Activated CD4-positive, alpha-beta T cell treated with anti-CD3 and anti-CD28 coated beads, Interleukin-2, amount 10 ng/mL, durations not matched to agents 24 days and 14 days (primary cell): ENCODE measurements at regions of chr4 and their contacts with region 1.

Region 1: DNA sequence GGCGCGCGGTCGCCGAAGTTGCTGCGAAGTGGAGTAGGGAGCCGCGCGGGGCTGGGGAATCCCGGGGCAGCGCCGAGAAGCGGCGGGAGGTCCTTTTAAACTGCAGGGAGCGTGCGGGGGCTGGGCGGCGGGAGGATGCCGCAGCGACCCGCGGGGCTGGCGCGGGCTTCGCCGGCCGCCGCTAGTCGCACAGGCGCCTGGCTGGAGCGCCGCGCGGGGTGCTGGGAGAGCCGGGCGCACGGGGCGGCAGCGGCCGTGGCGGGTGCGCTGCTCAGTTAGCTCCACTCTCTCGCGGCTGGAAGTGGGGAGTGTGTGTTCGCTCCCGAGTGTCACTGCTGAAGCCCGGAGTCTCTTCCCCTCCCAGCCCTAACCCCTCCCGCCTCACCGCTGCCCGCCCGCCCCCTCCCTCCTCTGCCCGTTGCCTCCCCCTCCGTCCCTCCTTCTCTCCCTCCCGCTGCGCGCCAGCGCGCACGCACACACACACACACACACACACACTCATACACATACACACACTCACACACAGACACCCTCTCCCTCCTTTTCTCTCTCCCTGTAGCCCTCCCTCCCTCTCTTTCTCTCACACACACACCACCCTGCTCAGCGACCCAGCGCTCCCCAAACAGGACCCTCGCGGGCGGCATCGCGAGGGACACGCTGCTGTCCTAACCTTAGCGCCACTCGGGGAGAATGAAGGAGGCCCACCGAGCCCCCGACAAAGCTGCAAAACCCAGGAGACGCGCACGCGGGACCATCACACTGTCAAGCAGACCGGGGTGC is at the start of gene NDNF:
- DNase-seq: peak; percentile 83
- H3K4me3 Mint-ChIP-seq: peak within 1 kb of the TSS; percentile 85
- H3K27ac Mint-ChIP-seq: peak within 1 kb of the TSS; percentile 32
- H3K4me1 Mint-ChIP-seq: peaks cover 25% of the 10 kb centered on the region
- H3K27me3 Mint-ChIP-seq: peaks cover 71% of the 10 kb centered on the region
- total RNA-seq, gene NDNF: 0.14 TPM in 1 of 2 replicates, not detected in the other

Region 2: GRCh38 chr4:120731561-120731960 is 340.9 kb before region 1 on chr4:
- intact Hi-C with region 1: no loop called
- DNase-seq: no peak
- H3K4me3 Mint-ChIP-seq: no peak overlapping the region
- H3K27ac Mint-ChIP-seq: no peak overlapping the region
- H3K4me1 Mint-ChIP-seq: no peaks in the 10 kb centered on the region
- H3K27me3 Mint-ChIP-seq: peaks cover 11% of the 10 kb centered on the region

Region 3: DNA sequence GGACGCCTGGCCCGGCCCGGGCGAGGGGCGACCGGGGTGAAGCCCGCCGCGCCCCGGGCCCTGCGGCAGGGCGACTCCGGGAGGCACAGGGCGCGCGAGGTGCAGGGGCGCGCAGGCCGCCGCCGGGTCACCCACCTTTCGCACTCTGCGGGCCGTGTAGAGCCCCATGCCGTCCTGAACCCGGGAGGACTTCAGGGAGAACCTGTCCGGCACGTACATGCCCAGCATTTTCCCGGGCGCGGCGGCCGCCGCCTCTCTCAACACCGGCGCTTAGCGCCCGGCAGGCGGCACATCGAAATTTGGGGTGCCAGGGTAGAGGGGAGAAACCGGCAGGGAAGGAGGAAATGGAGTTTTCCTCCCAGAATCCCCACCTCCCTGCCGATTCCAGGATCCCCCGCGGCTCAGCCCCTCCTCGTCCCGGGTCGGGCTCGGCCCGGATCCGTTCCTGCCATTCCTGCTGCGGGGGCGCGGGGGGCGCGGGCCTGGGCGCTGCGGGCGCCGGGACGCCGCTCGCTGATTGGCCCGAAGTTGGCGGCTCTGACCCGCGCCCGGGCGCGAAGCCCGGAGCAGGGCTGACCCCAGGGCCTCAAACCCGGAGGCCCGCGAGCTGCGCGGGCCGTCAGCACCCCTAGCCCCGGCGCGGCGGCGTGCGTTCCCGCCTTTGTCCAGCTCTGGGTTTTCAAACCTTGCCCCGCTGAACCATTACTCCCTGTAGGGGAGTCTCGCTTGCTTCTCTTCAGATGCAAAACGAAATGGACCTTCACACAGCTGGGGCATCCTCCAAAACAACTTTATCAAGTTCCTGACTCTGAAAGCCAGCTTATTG is 149.8 kb before region 1 on chr4 and contains the start of gene PRDM5:
- intact Hi-C with region 1: loop called (anchors 2 kb)
- DNase-seq: peak; percentile 67
- H3K4me3 Mint-ChIP-seq: peak within 1 kb of the TSS; percentile 93
- H3K27ac Mint-ChIP-seq: peak within 1 kb of the TSS; percentile 47
- H3K4me1 Mint-ChIP-seq: peaks cover 7% of the 10 kb centered on the region
- H3K27me3 Mint-ChIP-seq: peaks cover 61% of the 10 kb centered on the region
- total RNA-seq, gene PRDM5: not detected in 2 replicates

Region 4: DNA sequence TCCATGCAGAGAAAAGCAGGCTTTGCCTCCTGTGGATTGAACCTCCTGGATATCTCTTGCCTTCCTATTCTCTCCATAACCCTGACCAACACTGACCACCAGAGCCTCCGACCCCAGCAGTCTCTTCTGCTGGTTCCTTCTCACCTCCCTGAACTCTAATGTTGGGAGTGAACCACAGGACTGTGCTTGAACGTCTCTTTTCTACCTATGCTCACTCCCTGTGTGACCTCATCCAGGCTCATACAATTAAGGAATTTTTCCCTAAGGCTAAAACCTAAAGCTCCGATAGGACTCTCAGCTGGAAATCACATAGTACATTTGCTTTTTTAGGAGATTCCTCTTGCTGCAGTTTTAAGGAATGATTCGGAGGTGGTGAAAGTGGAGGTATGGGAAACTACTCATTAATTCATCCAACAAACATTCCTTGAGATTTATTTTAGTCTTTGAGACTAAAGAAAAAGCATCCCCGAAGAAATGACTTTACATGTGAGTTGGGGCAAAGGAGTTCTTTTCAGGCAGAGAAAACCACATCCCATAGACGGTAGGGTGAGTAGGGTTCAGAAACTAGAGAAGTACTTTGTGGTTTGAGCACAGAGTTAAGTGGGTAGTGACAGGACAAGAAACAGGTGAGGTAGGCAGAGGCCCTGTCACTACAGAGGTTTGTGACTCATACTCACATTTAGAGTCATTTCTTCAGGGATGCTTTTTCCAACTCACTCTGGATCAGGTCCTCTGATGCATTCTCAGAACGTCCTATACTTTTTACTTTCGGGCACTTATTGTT is 30.9 kb before region 1 on chr4:
- intact Hi-C with region 1: loop called (anchors 1 kb)
- DNase-seq: peak; percentile 72
- H3K4me3 Mint-ChIP-seq: no peak overlapping the region
- H3K27ac Mint-ChIP-seq: peak overlapping the region; percentile 0
- H3K4me1 Mint-ChIP-seq: peaks cover 11% of the 10 kb centered on the region
- H3K27me3 Mint-ChIP-seq: peaks cover 49% of the 10 kb centered on the region

Region 5: DNA sequence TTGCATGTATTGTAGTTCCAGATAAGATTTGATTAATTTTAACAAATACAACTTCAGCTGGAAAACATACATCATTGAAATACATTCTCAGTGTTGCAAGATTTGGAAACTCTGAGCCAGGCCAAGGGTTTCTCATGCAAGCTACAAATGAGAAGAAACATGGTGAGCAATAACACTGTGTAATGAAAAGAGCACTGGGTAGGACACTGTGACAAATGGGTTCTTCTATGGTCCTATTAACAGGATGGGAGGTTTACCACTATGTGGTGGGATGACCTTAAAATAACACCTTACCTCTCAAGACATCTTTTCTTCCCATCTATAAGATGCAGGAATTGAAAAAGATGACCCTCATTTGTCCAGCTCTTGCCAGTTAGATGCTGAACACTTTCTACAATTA is 19.5 kb after region 1 on chr4:
- intact Hi-C with region 1: no loop called
- DNase-seq: no peak
- H3K4me3 Mint-ChIP-seq: no peak overlapping the region
- H3K27ac Mint-ChIP-seq: no peak overlapping the region
- H3K4me1 Mint-ChIP-seq: no peaks in the 10 kb centered on the region
- H3K27me3 Mint-ChIP-seq: peaks cover 9% of the 10 kb centered on the region

Region 6: GRCh38 chr4:121154103-121154515 is 81.7 kb after region 1 on chr4:
- intact Hi-C with region 1: no loop called
- DNase-seq: peak; percentile 86
- H3K4me3 Mint-ChIP-seq: peak overlapping the region; percentile 68
- H3K27ac Mint-ChIP-seq: peak overlapping the region; percentile 63
- H3K4me1 Mint-ChIP-seq: peaks cover 53% of the 10 kb centered on the region
- H3K27me3 Mint-ChIP-seq: peaks cover 10% of the 10 kb centered on the region